Panc1 (cell line): ENCODE measurements at regions of chr3 and their contacts with region 1.

Region 1: DNA sequence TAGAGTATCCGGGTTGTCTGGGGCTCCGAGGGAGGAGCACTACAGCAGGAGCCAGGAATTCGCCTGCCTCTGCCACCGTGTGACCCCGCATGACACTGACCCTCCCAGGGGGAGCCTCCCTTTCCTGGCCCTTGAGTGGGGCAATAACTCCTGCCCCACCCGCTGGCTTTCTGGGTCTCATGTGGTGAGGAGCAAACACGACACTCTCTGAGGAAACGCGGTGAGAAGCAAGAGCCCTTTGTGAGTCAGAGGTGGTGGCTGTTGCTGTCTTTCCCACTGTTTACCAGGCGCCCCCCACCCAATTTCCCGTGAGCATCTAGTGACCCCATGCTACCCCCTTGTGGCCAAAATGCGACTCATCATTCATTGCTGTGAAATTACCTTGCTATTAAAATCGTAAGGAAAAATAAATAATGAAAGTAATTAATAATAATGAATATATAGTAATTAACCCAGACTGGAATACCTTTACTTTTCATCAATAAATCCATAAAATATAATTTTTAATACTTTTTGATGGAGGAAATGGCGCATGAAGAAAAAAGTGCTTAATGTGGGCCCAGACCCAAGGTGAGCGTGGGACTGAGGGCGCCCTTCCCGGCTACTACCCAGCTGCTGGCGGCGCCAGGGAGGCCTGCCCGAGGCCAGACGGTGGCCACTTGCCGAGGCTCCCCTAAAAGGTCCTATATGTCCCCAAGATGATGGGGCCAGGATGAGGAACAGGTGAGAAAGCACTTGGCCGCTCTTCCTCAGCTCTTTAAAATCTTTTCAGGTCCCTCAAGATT is 29.3 kb downstream of the CCNL1 start:
- DNase-seq: no peak
- ATAC-seq: peak; percentile 78
- H3K4me3 ChIP-seq: peak overlapping the region; percentile 18 to 58
- H3K27ac ChIP-seq: peak overlapping the region; percentile 90
- H3K4me1 ChIP-seq: peaks cover 50% of the 10 kb centered on the region
- H3K27me3 ChIP-seq: no peaks in the 10 kb centered on the region
- CTCF ChIP-seq: peak; percentile 92

Region 2: GRCh38 chr3:155880286-155880685 is 1250.4 kb before region 1 on chr3:
- CTCF ChIA-PET with region 1: no interaction called
- POLR2A ChIA-PET with region 1: no interaction called
- in situ Hi-C with region 1: no loop called
- intact Hi-C with region 1: loop called (anchors 5 kb)
- DNase-seq: no peak
- ATAC-seq: no peak
- H3K4me3 ChIP-seq: no peak overlapping the region
- H3K27ac ChIP-seq: no peak overlapping the region
- H3K4me1 ChIP-seq: peaks cover 11% of the 10 kb centered on the region; the same call in 1 of the 2 replicates
- H3K27me3 ChIP-seq: no peaks in the 10 kb centered on the region
- CTCF ChIP-seq: no peak

Region 3: GRCh38 chr3:156151824-156152428 is 978.7 kb before region 1 on chr3:
- CTCF ChIA-PET with region 1: no interaction called
- POLR2A ChIA-PET with region 1: no interaction called
- in situ Hi-C with region 1: no loop called
- intact Hi-C with region 1: loop called (anchors 10 kb)
- DNase-seq: peak; percentile 28
- ATAC-seq: peak; percentile 85
- H3K4me3 ChIP-seq: no peak overlapping the region
- H3K27ac ChIP-seq: no peak overlapping the region
- H3K4me1 ChIP-seq: no peaks in the 10 kb centered on the region
- H3K27me3 ChIP-seq: no peaks in the 10 kb centered on the region
- CTCF ChIP-seq: peak; percentile 92

Region 4: GRCh38 chr3:156674046-156674910 is 456.4 kb before region 1 on chr3 and contains the start of gene TIPARP:
- CTCF ChIA-PET with region 1: no interaction called
- POLR2A ChIA-PET with region 1: no interaction called
- in situ Hi-C with region 1: no loop called
- intact Hi-C with region 1: loop called (anchors 5 kb)
- DNase-seq: peak; percentile 93
- ATAC-seq: peak; percentile 90
- H3K4me3 ChIP-seq: peak within 1 kb of the TSS; percentile 84 to 89
- H3K27ac ChIP-seq: peak within 1 kb of the TSS; percentile 86
- H3K4me1 ChIP-seq: peaks cover 27% of the 10 kb centered on the region
- H3K27me3 ChIP-seq: no peaks in the 10 kb centered on the region
- CTCF ChIP-seq: peak; percentile 93
- total RNA-seq, gene TIPARP: 22.1 TPM

Region 5: DNA sequence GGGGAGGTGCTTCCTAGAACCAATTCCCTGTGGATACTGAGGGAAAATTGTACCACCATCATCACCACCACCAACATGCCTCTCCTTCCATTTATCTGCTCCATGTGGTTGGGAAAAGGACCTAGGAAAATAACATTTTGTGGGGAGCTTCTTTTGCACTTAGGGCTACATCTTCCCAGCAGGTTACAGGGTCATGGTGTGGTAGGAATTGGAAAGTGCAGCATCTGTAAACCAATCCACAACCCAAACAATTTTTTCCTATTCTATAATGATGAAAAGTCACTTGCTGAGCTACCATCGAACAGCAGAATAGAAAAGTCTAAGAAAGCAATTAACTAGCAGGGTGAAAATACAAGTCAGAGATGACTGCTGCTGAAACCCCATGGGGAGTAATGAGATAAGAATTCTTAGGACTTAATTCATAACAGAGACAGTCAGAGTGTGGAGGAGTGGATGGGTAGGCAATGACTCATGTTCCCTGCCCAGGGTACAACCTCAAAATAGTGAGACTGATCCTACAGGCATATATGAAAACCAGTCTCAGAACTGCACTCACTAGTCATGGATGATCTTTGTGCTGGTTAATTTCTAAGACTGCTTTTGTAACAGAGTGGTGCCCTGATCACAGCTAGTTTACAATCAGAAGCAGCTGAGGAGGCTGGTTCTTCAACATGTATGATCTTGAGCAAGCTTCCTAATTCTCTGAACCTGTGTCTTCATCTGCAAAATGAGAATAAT is 342.6 kb before region 1 on chr3:
- CTCF ChIA-PET with region 1: no interaction called
- POLR2A ChIA-PET with region 1: no interaction called
- in situ Hi-C with region 1: no loop called
- intact Hi-C with region 1: no loop called
- DNase-seq: peak; percentile 53
- ATAC-seq: peak; percentile 87
- H3K4me3 ChIP-seq: no peak overlapping the region
- H3K27ac ChIP-seq: no peak overlapping the region
- H3K4me1 ChIP-seq: peaks cover 16% of the 10 kb centered on the region
- H3K27me3 ChIP-seq: no peaks in the 10 kb centered on the region
- CTCF ChIP-seq: no peak

Region 6: GRCh38 chr3:157088601-157089454 is 41.8 kb before region 1 on chr3:
- CTCF ChIA-PET with region 1: interaction called, 6 read pairs
- POLR2A ChIA-PET with region 1: interaction called, 3 read pairs
- in situ Hi-C with region 1: no loop called
- intact Hi-C with region 1: loop called (anchors 5 kb)
- DNase-seq: peak; percentile 61
- ATAC-seq: peak; percentile 94
- H3K4me3 ChIP-seq: peak overlapping the region; percentile 66 to 74
- H3K27ac ChIP-seq: peak overlapping the region; percentile 93
- H3K4me1 ChIP-seq: peaks cover 21% of the 10 kb centered on the region
- H3K27me3 ChIP-seq: no peaks in the 10 kb centered on the region
- CTCF ChIP-seq: peak; percentile 37